GM12878 (cell line): ENCODE measurements at regions of chr15 and their contacts with region 1.

Region 1: DNA sequence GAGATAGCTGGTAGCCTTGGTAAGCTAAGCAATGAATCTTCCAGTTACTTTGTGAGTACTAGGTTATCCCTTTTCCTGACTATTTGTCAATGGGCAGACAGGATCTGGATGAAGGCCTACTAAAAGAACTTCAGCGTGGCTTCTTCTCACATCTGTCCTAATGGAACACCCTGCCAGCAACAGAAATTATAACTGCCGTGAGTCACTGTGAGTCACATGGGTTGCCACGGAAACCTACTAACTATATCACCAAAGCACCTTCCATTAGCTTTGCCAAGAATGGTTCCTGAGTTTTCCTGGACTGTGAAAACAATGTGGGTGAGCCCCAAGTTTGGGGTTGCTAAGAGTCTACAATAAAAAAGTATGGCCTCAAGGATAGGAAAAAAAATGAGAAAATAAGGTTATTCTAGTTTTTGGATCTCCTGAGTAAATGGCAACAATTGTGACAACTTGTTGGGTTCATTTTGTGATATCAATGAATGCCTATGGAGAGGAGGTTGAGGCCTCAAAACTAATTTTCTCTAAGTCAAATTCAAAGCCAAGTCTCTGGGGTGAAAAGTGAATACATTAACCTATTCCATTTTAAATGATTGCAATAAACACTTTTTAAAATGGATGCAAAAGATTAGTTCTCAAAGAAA is 195.1 kb upstream of the ICE2 start:
- DNase-seq: no peak
- ATAC-seq: no peak
- H3K4me3 ChIP-seq: no peak overlapping the region
- H3K27ac ChIP-seq: no peak overlapping the region
- H3K4me1 ChIP-seq: peaks cover 26% of the 10 kb centered on the region
- H3K27me3 ChIP-seq: no peaks in the 10 kb centered on the region
- CTCF ChIP-seq: no peak
- EP300 ChIP-seq: no peak
- POLR2A ChIP-seq: no peak
- RAD21 ChIP-seq: no peak

Region 2: GRCh38 chr15:60414016-60414682 is 259.9 kb before region 1 on chr15:
- CTCF ChIA-PET with region 1: no interaction called
- POLR2A ChIA-PET with region 1: no interaction called
- RAD21 ChIA-PET with region 1: no interaction called
- SMC1A ChIA-PET with region 1: no interaction called
- in situ Hi-C with region 1: no loop called
- intact Hi-C with region 1: no loop called
- DNase-seq: no peak
- ATAC-seq: no peak
- H3K4me3 ChIP-seq: no peak overlapping the region
- H3K27ac ChIP-seq: no peak overlapping the region
- H3K4me1 ChIP-seq: no peaks in the 10 kb centered on the region
- H3K27me3 ChIP-seq: no peaks in the 10 kb centered on the region
- CTCF ChIP-seq: no peak
- EP300 ChIP-seq: no peak
- POLR2A ChIP-seq: no peak
- RAD21 ChIP-seq: no peak

Region 3: DNA sequence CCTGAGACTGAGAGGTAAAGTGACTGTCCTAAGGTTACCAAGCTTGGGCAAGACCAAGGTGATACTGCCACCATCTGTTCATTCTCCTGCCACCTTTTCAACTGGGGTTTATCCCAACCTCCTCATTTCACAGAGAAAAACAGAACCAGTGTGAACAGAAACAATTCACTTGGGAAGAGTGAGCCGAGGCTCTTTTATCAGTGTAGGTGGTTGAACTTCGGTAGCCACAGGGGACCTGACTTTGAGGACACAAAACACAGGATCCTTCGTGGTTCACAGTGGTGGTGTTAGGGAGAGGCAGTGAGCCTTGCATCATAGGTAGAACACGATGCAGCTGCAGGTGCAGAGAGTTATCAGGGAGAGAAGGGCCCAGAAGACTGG is 122.3 kb before region 1 on chr15:
- CTCF ChIA-PET with region 1: no interaction called
- POLR2A ChIA-PET with region 1: no interaction called
- RAD21 ChIA-PET with region 1: no interaction called
- SMC1A ChIA-PET with region 1: no interaction called
- in situ Hi-C with region 1: no loop called
- intact Hi-C with region 1: no loop called
- DNase-seq: no peak
- ATAC-seq: peak; percentile 54
- H3K4me3 ChIP-seq: peak overlapping the region; percentile 17
- H3K27ac ChIP-seq: peak overlapping the region; percentile 71
- H3K4me1 ChIP-seq: peaks cover 63% of the 10 kb centered on the region
- H3K27me3 ChIP-seq: no peaks in the 10 kb centered on the region
- CTCF ChIP-seq: peak; percentile 22 to 50 (median 31); a peak in 4 of 6 replicates
- EP300 ChIP-seq: no peak
- POLR2A ChIP-seq: no peak
- RAD21 ChIP-seq: peak; percentile 40

Region 4: GRCh38 chr15:60905587-60905986 is 231.5 kb after region 1 on chr15:
- CTCF ChIA-PET with region 1: interaction called, 15 read pairs
- POLR2A ChIA-PET with region 1: no interaction called
- RAD21 ChIA-PET with region 1: interaction called, 7 read pairs
- SMC1A ChIA-PET with region 1: interaction called, 8 read pairs
- in situ Hi-C with region 1: no loop called
- intact Hi-C with region 1: no loop called
- DNase-seq: no peak
- ATAC-seq: peak; percentile 32
- H3K4me3 ChIP-seq: no peak overlapping the region
- H3K27ac ChIP-seq: no peak overlapping the region
- H3K4me1 ChIP-seq: peaks cover 26% of the 10 kb centered on the region
- H3K27me3 ChIP-seq: no peaks in the 10 kb centered on the region
- CTCF ChIP-seq: peak in 2 of 3 experiments; percentile 22 to 45; a peak in 3 of 6 replicates
- EP300 ChIP-seq: no peak
- POLR2A ChIP-seq: no peak
- RAD21 ChIP-seq: peak; percentile 52

Region 5: GRCh38 chr15:61227269-61227949 is 553.4 kb after region 1 on chr15:
- CTCF ChIA-PET with region 1: no interaction called
- POLR2A ChIA-PET with region 1: no interaction called
- RAD21 ChIA-PET with region 1: no interaction called
- SMC1A ChIA-PET with region 1: no interaction called
- in situ Hi-C with region 1: no loop called
- intact Hi-C with region 1: no loop called
- DNase-seq: no peak
- ATAC-seq: no peak
- H3K4me3 ChIP-seq: no peak overlapping the region
- H3K27ac ChIP-seq: no peak overlapping the region
- H3K4me1 ChIP-seq: no peaks in the 10 kb centered on the region
- H3K27me3 ChIP-seq: peaks cover 2 to 10% of the 10 kb centered on the region in 2 experiments; a peak in 3 of 4 replicates
- CTCF ChIP-seq: no peak
- EP300 ChIP-seq: no peak
- POLR2A ChIP-seq: no peak
- RAD21 ChIP-seq: no peak